Activated CD4-positive, alpha-beta T cell treated with anti-CD3 and anti-CD28 coated beads, Interleukin-2, amount 10 ng/mL, durations not matched to agents 24 days and 14 days (primary cell): ENCODE measurements at regions of chr1 and their contacts with region 1.

Region 1: DNA sequence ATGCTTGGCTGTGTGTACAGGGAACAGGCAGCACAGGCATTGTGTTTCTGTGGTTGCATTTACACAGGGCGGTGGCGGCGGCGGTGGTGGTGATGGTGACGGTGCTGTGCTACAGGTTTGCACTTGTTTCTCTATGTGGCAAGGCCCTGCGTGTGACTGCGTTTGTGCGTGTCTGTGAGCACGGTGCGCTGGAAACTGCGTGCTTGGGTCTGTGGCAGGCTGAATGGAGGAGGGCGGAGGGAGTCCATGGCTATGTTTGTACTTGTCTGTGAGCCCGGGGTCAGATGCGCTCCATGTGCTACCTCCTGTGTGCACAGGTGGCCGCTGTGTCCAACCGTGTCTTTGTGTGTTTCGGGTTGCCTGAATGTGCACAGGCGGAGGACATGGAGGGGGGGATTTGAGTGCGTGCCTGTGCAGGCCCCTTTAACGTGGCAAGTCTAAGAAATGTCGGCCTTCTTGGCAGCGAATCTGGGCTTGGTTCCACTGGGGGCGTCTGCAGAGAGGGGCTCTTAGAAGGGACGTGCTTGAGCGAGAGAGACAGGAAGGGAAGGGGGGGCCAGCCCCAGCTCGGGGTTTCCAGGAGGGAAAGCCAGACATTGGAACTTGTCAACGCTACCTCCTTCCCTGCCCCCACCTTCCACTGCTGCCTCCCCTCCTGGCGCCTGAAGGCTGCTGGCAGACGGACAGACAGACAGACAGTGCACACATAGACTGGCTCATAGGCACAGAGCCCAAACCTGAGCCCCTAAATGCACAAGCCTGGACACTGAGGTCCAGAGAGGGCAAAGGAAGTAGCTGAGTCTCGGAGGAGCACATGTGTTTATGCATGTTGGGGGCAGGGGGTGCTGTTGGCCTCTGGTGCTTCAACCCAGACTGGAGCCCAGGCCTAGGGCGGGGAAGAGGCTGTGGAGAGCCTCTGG is 32.7 kb upstream of the WASF2 start:
- DNase-seq: peak; percentile 91
- H3K4me3 Mint-ChIP-seq: peak overlapping the region; percentile 84
- H3K27ac Mint-ChIP-seq: peak overlapping the region; percentile 96
- H3K4me1 Mint-ChIP-seq: peaks cover 66% of the 10 kb centered on the region
- H3K27me3 Mint-ChIP-seq: no peaks in the 10 kb centered on the region

Region 2: GRCh38 chr1:27445177-27445936 is 77.3 kb before region 1 on chr1:
- intact Hi-C with region 1: loop called (anchors 5 kb)
- DNase-seq: peak; percentile 63
- H3K4me3 Mint-ChIP-seq: peak overlapping the region; percentile 70
- H3K27ac Mint-ChIP-seq: peak overlapping the region; percentile 97
- H3K4me1 Mint-ChIP-seq: peaks cover 34% of the 10 kb centered on the region
- H3K27me3 Mint-ChIP-seq: no peaks in the 10 kb centered on the region

Region 3: DNA sequence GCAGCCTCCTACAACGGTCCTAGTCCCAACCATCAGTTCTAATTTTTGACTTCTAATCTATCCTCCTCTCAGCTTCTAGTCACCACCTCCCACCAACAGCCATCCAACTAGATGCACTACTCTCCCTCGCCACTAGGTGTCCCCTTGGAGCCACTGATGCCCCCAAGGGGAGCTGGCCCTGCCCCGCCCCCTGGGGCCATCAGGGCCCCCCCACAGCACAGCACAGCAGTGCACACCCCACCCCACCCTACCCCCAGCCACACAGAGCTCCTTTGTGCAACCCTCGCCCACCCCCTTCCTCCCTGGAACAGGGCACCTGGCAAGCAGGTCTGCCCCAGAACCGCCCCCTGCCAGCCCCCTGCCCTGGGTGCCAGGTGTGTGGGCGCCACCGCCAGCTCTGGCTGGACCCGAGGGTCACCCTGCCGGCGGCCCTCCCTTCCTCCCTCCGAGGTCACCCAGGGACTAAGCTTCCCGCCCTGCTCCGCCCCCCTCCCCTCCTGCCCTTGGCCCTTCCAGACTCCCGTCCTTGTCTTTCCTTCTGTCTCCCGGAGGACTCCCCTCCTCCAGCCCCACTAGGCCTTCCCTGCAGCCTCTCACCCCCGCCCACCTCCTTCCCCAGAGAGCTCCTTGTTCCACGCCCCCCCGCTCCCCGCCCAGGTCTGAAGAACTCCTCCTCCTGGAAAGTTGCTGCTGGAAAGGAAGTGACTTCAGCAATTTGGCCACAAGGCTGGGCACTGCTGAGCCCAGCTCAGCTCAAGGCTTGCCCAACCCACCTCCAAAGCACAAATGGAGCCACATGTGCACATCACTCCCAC is 34.3 kb after region 1 on chr1:
- intact Hi-C with region 1: loop called (anchors 5 kb)
- DNase-seq: peak; percentile 92
- H3K4me3 Mint-ChIP-seq: peak overlapping the region; percentile 59
- H3K27ac Mint-ChIP-seq: peak overlapping the region; percentile 81
- H3K4me1 Mint-ChIP-seq: peaks cover 47% of the 10 kb centered on the region
- H3K27me3 Mint-ChIP-seq: no peaks in the 10 kb centered on the region

Region 4: GRCh38 chr1:27594562-27595510 is 72.1 kb after region 1 on chr1:
- intact Hi-C with region 1: loop called (anchors 2 kb)
- DNase-seq: peak; percentile 66
- H3K4me3 Mint-ChIP-seq: no peak overlapping the region
- H3K27ac Mint-ChIP-seq: no peak overlapping the region
- H3K4me1 Mint-ChIP-seq: peaks cover 18% of the 10 kb centered on the region
- H3K27me3 Mint-ChIP-seq: no peaks in the 10 kb centered on the region

Region 5: DNA sequence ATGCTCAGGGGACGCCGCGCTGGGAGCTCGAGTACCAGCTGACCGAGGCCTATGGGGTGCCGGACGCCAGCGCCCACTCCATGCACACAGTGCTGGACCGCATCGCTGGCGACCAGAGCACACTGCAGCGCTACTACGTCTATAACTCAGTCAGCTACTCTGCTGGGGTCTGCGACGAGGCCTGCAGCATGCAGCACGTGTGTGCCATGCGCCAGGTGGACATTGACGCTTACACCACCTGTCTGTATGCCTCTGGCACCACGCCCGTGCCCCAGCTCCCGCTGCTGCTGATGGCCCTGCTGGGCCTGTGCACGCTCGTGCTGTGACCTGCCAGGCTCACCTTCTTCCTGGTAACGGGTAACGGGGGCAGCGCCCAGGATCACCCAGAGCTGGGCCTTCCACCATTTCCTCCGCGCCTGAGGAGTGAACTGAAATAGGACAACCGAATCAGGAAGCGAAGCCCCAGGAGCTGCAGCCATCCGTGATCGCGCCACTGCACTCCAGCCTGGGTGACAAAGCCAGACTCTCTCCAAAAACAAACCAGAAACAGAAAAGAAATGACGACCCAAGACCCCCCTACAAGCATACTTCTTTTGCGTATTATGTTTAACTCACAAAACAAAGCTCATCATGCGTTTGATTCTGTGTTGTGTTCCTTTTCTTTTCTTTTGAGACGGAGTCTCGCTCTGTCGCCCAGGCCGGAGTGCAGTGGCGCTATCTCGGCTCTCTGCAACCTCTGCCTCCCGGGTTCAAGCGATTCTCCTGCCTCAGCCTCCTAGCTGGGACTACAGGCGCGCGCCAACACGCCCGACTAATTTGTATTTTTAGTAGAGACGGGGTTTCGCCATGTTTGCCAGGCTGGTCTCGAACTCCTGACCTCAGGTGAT is 436.1 kb after region 1 on chr1:
- intact Hi-C with region 1: no loop called
- DNase-seq: no peak
- H3K4me3 Mint-ChIP-seq: peak overlapping the region; percentile 86
- H3K27ac Mint-ChIP-seq: peak overlapping the region; percentile 74
- H3K4me1 Mint-ChIP-seq: peaks cover 13% of the 10 kb centered on the region
- H3K27me3 Mint-ChIP-seq: peaks cover 2% of the 10 kb centered on the region